Ascending aorta (tissue), 2 donors: ENCODE measurements at regions of chr2 and their contacts with region 1.

Region 1: DNA sequence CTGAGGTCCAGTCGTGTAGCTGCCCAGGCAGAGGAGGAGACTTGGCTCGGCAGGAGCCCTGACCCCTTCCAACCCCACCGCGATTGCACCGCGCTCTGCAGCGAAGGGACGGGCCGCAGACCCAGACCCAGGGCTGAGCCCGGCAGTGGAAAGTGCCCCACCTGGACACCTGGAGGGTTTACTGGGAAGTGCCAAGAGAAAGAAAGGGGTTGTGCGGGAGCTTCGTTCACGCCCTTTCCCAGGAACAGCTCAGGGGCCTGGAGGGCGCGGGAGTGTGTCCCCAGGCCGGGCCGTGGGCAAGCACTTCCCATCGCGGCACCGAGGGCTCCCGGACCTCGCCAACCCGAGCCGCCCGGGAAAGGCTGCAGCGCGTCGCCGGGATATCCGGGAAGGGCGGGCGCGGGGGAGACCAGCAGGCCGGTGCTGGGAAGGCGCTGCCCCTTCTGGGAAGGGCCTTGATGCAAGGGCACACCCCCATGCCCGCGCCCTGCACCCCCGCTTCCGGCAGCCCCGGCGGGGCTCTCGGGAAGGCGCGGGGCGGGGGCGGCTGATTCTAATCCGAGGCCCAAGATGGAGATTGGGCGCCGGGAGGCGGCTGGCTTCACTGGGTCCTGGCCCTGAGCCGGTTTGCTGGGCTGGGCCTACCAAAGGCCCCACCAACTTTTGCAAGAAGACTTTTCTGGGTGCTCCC is 36.1 kb upstream of the MRPL33 start:
- DNase-seq: peak; percentile 60 to 94
- H3K4me3 ChIP-seq: peak overlapping the region; percentile 50 to 67
- H3K27ac ChIP-seq: peak overlapping the region; percentile 90
- H3K4me1 ChIP-seq: peaks cover 5 to 18% of the 10 kb centered on the region in 2 donors
- H3K27me3 ChIP-seq: no peaks in the 10 kb centered on the region
- CTCF ChIP-seq: no peak

Region 2: GRCh38 chr2:27663463-27664249 is 71.8 kb before region 1 on chr2 and contains the starts of genes SLC4A1AP and SUPT7L:
- intact Hi-C with region 1: no loop called
- DNase-seq: peak; percentile 20 to 82
- H3K4me3 ChIP-seq: peak within 1 kb of the TSS; percentile 82 to 95
- H3K27ac ChIP-seq: peak within 1 kb of the TSS; percentile 90 to 93
- H3K4me1 ChIP-seq: peaks cover 14 to 22% of the 10 kb centered on the region in 2 donors
- H3K27me3 ChIP-seq: no peaks in the 10 kb centered on the region
- CTCF ChIP-seq: no peak
- total RNA-seq, gene SLC4A1AP: 26.8 TPM
- total RNA-seq, gene SUPT7L: 6.1 TPM

Region 3: DNA sequence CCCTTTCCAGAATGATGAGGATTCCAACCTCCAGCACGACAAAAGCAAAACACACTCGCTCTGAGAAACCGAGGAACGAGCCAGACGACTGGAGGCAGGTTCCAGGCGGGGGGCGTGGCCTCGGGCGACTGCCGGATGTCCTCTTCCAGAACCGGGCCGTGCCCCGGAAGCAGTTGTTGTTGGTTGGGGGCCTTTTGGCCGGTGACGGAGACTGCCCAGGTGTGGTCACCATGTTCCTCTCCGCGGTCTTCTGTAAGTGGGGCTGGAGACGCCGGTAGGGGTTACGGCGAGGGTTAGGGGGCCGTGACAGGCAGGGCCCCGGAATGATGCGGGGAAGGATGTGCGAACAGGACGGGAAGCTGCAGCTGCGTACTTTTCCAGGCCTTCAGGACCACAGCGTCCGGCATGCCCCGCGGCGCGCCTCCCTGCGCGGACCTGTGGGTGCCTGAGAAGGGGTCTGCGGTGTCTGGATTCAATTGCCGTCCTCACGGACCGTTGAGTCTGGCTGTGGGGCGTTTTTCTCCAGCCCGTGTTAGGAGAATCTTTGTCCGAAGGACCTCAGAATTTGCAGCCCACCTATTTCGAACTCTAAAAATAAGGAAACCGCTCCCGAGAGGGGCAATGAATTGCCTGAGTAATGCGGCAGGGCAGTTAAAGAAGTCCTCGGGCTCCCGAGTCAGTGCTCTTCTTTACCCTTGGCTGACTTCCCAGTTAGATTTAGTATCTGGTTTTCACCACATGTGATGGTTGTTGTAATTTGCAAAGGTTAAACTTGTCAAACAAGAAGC is 36.3 kb after region 1 on chr2 and contains the start of gene MRPL33:
- intact Hi-C with region 1: loop called (anchors 2 kb)
- DNase-seq: peak; percentile 83 to 97
- H3K4me3 ChIP-seq: peak within 1 kb of the TSS; percentile 80 to 92
- H3K27ac ChIP-seq: peak within 1 kb of the TSS; percentile 90 to 96
- H3K4me1 ChIP-seq: peaks cover 9 to 22% of the 10 kb centered on the region in 2 donors
- H3K27me3 ChIP-seq: no peaks in the 10 kb centered on the region
- CTCF ChIP-seq: no peak
- total RNA-seq, gene MRPL33: 3.4 TPM